ENCODE measurements at regions of chr2 and their contacts with region 1.

Region 1: GRCh38 chr2:7281231-7282201 is 364.3 kb downstream of the RNF144A start:
- DNase-seq: no peak
- ATAC-seq: no peak
- H3K4me3 Mint-ChIP-seq: no peak overlapping the region
- H3K27ac Mint-ChIP-seq: no peak overlapping the region
- H3K4me1 Mint-ChIP-seq: no peaks in the 10 kb centered on the region
- H3K27me3 Mint-ChIP-seq: peaks cover 2% of the 10 kb centered on the region

Region 2: DNA sequence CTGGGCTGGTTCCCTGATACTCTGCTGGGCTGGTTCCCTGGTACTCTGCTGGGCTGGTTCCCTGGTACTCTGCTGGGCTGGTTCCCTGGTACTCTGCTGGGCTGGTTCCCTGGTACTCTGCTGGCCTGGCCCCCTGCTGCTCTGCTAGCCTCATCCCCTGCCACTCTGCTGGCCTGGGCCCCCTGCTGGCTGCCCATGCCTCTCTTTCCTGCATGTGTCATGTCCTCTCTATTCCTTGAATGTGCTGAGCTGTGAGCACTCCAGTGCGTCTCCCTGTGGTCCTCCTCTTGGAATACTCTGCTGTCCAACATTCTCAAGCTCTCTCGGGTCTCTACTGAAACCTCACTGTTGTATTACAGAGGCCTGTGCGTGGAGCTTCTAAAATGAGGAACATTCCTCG is 148.0 kb before region 1 on chr2:
- CTCF ChIA-PET with region 1: no interaction called
- POLR2A ChIA-PET with region 1: no interaction called
- intact Hi-C with region 1: no loop called
- DNase-seq: no peak
- ATAC-seq: no peak
- H3K4me3 Mint-ChIP-seq: no peak overlapping the region
- H3K27ac Mint-ChIP-seq: no peak overlapping the region
- H3K4me1 Mint-ChIP-seq: no peaks in the 10 kb centered on the region
- H3K27me3 Mint-ChIP-seq: no peaks in the 10 kb centered on the region

Region 3: DNA sequence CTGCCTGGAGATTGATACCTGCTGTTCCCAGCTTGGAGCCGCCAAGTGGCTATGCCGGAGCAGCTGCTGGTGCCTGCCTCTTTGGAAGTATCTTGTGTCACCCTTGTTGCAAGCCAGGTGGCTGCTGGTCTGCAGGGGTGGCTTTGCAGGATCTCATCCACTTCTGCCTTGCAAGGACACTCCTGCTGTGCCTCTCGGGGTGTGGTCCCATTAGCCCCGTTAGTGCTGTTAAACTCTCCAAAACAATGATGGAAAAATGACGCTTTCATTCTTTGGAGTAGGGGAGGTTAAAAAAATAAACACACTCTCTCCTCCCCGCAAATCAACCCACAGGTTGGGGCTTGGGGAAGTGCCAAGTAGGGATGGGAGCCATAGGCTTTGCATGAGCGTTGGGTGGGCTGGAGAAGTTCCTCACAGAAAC is 11.5 kb before region 1 on chr2:
- CTCF ChIA-PET with region 1: no interaction called
- POLR2A ChIA-PET with region 1: no interaction called
- intact Hi-C with region 1: no loop called
- DNase-seq: no peak
- ATAC-seq: no peak
- H3K4me3 Mint-ChIP-seq: no peak overlapping the region
- H3K27ac Mint-ChIP-seq: no peak overlapping the region
- H3K4me1 Mint-ChIP-seq: no peaks in the 10 kb centered on the region
- H3K27me3 Mint-ChIP-seq: peaks cover 3% of the 10 kb centered on the region

Region 4: GRCh38 chr2:7405861-7406715 is 124.6 kb after region 1 on chr2:
- CTCF ChIA-PET with region 1: interaction called, 10 read pairs
- POLR2A ChIA-PET with region 1: no interaction called
- intact Hi-C with region 1: no loop called
- DNase-seq: no peak
- ATAC-seq: no peak
- H3K4me3 Mint-ChIP-seq: no peak overlapping the region
- H3K27ac Mint-ChIP-seq: no peak overlapping the region
- H3K4me1 Mint-ChIP-seq: peaks cover 11% of the 10 kb centered on the region
- H3K27me3 Mint-ChIP-seq: peaks cover 22% of the 10 kb centered on the region

Region 5: GRCh38 chr2:7707723-7708122 is 426.2 kb after region 1 on chr2:
- CTCF ChIA-PET with region 1: no interaction called
- POLR2A ChIA-PET with region 1: no interaction called
- intact Hi-C with region 1: no loop called
- DNase-seq: no peak
- ATAC-seq: no peak
- H3K4me3 Mint-ChIP-seq: no peak overlapping the region
- H3K27ac Mint-ChIP-seq: no peak overlapping the region
- H3K4me1 Mint-ChIP-seq: peaks cover 9% of the 10 kb centered on the region
- H3K27me3 Mint-ChIP-seq: no peaks in the 10 kb centered on the region

Region 6: DNA sequence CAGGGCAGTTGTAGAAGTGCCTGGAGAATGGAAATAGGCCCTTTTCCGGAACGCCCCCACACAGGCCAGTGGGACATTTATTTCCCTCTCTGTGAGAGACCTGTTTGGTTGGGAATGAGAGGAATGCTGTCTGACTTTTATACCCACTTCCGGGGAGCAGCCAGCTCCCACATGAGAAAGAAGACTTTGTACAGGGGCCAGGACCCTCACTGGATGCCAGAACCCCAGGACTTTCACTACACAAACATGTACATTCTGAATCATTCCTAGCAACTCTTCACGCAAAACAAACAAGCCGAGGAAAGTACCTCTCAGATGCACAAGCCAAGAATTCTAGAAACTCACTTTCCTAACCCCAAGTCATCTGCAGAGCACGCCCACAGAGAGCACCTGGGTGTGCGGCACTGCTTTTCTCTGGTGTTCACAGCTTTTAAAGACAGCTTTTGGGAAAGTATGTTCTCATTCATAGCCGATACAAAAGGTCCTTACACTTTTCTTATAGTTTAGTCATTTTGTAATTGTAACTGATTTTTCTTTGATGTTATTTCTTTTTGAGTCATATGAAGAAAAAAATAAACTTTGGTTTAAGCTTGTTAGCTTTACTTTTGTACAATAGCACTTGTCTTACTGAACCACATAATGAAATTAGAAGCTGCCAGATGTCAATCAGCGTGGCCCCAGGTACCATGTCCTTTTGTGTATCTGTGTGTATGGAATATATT is 544.2 kb after region 1 on chr2:
- CTCF ChIA-PET with region 1: no interaction called
- POLR2A ChIA-PET with region 1: no interaction called
- intact Hi-C with region 1: no loop called
- DNase-seq: peak; percentile 86
- ATAC-seq: peak; percentile 95
- H3K4me3 Mint-ChIP-seq: peak overlapping the region; percentile 26
- H3K27ac Mint-ChIP-seq: peak overlapping the region; percentile 93
- H3K4me1 Mint-ChIP-seq: peaks cover 27% of the 10 kb centered on the region
- H3K27me3 Mint-ChIP-seq: peaks cover 3% of the 10 kb centered on the region

Measured in activated CD4-positive, alpha-beta T cell treated with anti-CD3 and anti-CD28 coated beads for 36 hours (primary cell).